Caco-2 (cell line): ENCODE measurements at regions of chr7 and their contacts with region 1.

Region 1: DNA sequence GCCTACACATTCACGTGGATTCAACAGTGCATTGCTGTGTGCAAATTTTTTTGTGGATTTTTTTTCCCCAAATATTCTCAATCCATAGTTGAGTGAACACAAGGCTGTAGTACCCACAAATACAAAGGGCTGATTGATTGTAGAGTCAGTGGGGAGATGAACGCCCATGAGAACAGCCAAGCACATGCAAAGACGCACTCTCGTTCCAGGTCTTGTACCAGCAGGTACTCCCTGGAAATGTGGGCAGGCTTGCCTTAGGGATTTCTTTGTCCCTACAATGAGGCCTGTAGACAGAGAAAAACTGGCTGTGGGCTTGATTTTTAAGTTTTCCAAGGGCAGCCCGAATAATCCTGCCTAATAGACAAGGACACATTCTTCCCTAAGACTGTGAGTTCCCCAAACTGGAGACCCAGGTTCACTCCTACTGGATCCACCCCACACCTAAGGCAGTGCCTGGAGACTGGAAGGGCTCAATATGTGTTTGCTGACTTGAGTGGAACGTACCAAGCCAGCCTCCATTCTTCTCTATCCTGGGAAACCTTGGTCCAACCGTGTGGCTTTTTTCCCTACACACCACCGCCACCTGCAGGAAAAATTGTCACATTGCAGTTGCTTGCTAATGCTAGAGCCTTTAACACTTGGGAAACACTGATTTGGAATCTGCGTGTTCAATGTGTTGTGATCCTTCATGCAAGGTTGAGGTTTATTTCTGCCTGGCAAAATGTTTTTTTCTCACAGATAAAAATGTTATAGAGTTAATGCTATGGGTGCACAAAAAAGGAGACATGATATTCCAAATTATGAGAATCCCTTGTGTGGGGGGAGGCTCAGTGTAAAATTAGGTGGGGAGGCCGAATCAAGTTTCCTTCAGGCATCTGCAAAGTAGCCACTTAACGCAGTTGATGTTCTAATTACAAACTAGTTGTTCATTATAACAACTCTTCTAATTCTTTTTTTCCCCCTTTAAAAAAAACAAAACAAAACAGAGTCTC is 49.3 kb downstream of the PPP1R17 start:
- DNase-seq: peak; percentile 61 to 76
- H3K4me3 ChIP-seq: no peak overlapping the region
- H3K4me3 Mint-ChIP-seq: no peak overlapping the region
- H3K27ac Mint-ChIP-seq: no peak overlapping the region
- H3K4me1 ChIP-seq: no peaks in the 10 kb centered on the region
- H3K4me1 Mint-ChIP-seq: no peaks in the 10 kb centered on the region
- H3K27me3 ChIP-seq: no peaks in the 10 kb centered on the region; the same call in 1 of the 2 replicates
- H3K27me3 Mint-ChIP-seq: peaks cover 9% of the 10 kb centered on the region
- CTCF ChIP-seq: peak; percentile 72 to 90

Region 2: GRCh38 chr7:31134246-31135188 is 601.8 kb before region 1 on chr7:
- CTCF ChIA-PET with region 1: no interaction called
- POLR2A ChIA-PET with region 1: no interaction called
- intact Hi-C with region 1: loop called (anchors 1 kb)
- DNase-seq: peak; percentile 75 to 78
- H3K4me3 ChIP-seq: no peak overlapping the region
- H3K4me3 Mint-ChIP-seq: no peak overlapping the region
- H3K27ac Mint-ChIP-seq: no peak overlapping the region
- H3K4me1 ChIP-seq: no peaks in the 10 kb centered on the region
- H3K4me1 Mint-ChIP-seq: no peaks in the 10 kb centered on the region
- H3K27me3 ChIP-seq: no peaks in the 10 kb centered on the region
- H3K27me3 Mint-ChIP-seq: peaks cover 3% of the 10 kb centered on the region
- CTCF ChIP-seq: peak; percentile 64 to 76

Region 3: DNA sequence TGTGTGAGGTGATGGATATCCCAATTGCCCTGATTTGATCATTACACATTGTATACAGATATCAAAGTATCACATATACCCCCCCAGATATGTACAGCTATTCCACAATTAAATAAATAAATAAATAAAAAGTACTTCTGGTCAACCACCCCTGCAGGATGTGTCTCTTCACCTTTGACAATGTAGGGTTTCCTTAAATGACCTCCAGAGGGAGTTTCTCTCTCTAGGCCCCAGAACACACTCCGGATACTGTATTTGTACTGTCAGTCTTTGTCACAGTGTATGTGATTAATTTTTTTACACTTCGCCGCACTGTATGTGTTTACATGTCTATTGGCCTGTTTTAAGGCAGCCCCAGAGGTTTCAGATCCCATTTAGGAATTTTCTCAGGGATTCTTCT is 560.6 kb before region 1 on chr7:
- CTCF ChIA-PET with region 1: no interaction called
- POLR2A ChIA-PET with region 1: no interaction called
- intact Hi-C with region 1: loop called (anchors 1 kb)
- DNase-seq: no peak
- H3K4me3 ChIP-seq: no peak overlapping the region
- H3K4me3 Mint-ChIP-seq: no peak overlapping the region
- H3K27ac Mint-ChIP-seq: no peak overlapping the region
- H3K4me1 ChIP-seq: no peaks in the 10 kb centered on the region
- H3K4me1 Mint-ChIP-seq: no peaks in the 10 kb centered on the region
- H3K27me3 ChIP-seq: no peaks in the 10 kb centered on the region
- H3K27me3 Mint-ChIP-seq: peaks cover 28% of the 10 kb centered on the region
- CTCF ChIP-seq: peak; percentile 40 to 56

Region 4: GRCh38 chr7:31192986-31193385 is 543.3 kb before region 1 on chr7:
- CTCF ChIA-PET with region 1: no interaction called
- POLR2A ChIA-PET with region 1: no interaction called
- intact Hi-C with region 1: loop called (anchors 1 kb)
- DNase-seq: peak; percentile 69
- H3K4me3 ChIP-seq: no peak overlapping the region
- H3K4me3 Mint-ChIP-seq: no peak overlapping the region
- H3K27ac Mint-ChIP-seq: no peak overlapping the region
- H3K4me1 ChIP-seq: no peaks in the 10 kb centered on the region
- H3K4me1 Mint-ChIP-seq: no peaks in the 10 kb centered on the region
- H3K27me3 ChIP-seq: no peaks in the 10 kb centered on the region
- H3K27me3 Mint-ChIP-seq: peaks cover 5% of the 10 kb centered on the region
- CTCF ChIP-seq: peak; percentile 72 to 87

Region 5: DNA sequence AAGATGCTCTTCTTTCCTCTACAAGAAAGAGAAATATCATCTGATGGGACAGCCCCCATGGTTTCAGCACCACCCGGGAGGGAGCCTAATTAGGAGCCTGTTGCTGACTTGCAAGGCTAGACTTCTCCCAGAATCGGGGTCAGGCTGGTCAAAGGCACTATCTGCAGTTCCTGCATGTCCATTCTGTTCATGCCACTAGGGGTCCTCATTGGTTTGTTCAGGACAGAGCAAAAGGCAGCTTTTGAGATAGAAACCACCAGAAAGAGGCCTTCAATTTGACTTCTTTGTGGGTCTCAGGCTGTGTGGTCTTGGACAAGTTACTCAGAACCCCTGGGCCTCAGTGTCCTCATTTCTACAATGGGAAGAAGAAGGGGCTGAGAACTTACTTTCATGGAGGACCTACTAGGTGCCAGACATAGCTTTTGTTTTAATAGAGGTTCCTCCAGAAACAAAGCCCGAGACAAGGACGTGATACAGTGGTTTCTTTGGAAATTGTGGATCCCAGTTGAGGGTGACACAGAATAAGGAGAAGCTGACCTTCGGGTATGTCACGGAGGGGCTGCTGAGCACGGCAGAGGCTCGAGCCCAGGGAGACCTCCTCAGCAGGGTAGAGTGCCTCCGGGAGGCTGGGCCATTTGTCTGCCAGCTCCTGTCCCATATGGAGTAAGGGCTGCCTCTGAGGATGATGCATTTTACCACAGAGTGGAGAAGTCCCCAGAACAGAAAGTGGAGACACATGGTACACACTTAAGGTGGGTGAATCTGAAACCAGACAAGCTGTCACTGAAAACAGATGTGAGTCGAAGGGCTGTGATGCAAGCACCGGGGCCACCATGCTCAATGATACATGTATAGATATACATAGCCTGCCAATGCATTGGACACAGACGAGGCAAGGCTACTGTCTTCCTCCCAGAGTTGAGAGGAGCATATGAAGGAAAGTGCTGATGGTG is 362.7 kb before region 1 on chr7:
- CTCF ChIA-PET with region 1: no interaction called
- POLR2A ChIA-PET with region 1: no interaction called
- intact Hi-C with region 1: loop called (anchors 1 kb)
- DNase-seq: peak; percentile 72 to 80
- H3K4me3 ChIP-seq: no peak overlapping the region
- H3K4me3 Mint-ChIP-seq: no peak overlapping the region
- H3K27ac Mint-ChIP-seq: no peak overlapping the region
- H3K4me1 ChIP-seq: no peaks in the 10 kb centered on the region
- H3K4me1 Mint-ChIP-seq: no peaks in the 10 kb centered on the region
- H3K27me3 ChIP-seq: no peaks in the 10 kb centered on the region; the same call in 1 of the 2 replicates
- H3K27me3 Mint-ChIP-seq: no peaks in the 10 kb centered on the region
- CTCF ChIP-seq: peak; percentile 79 to 87

Region 6: GRCh38 chr7:31648288-31648687 is 88.0 kb before region 1 on chr7:
- CTCF ChIA-PET with region 1: no interaction called
- POLR2A ChIA-PET with region 1: no interaction called
- intact Hi-C with region 1: loop called (anchors 1 kb)
- DNase-seq: no peak
- H3K4me3 ChIP-seq: no peak overlapping the region
- H3K4me3 Mint-ChIP-seq: no peak overlapping the region
- H3K27ac Mint-ChIP-seq: no peak overlapping the region
- H3K4me1 ChIP-seq: no peaks in the 10 kb centered on the region
- H3K4me1 Mint-ChIP-seq: no peaks in the 10 kb centered on the region
- H3K27me3 ChIP-seq: no peaks in the 10 kb centered on the region
- H3K27me3 Mint-ChIP-seq: peaks cover 28% of the 10 kb centered on the region
- CTCF ChIP-seq: peak in 1 of 2 experiments; percentile 15